Activated CD4-positive, alpha-beta T cell treated with anti-CD3 and anti-CD28 coated beads for 36 hours (primary cell): ENCODE measurements at regions of chr19 and their contacts with region 1.

Region 1: DNA sequence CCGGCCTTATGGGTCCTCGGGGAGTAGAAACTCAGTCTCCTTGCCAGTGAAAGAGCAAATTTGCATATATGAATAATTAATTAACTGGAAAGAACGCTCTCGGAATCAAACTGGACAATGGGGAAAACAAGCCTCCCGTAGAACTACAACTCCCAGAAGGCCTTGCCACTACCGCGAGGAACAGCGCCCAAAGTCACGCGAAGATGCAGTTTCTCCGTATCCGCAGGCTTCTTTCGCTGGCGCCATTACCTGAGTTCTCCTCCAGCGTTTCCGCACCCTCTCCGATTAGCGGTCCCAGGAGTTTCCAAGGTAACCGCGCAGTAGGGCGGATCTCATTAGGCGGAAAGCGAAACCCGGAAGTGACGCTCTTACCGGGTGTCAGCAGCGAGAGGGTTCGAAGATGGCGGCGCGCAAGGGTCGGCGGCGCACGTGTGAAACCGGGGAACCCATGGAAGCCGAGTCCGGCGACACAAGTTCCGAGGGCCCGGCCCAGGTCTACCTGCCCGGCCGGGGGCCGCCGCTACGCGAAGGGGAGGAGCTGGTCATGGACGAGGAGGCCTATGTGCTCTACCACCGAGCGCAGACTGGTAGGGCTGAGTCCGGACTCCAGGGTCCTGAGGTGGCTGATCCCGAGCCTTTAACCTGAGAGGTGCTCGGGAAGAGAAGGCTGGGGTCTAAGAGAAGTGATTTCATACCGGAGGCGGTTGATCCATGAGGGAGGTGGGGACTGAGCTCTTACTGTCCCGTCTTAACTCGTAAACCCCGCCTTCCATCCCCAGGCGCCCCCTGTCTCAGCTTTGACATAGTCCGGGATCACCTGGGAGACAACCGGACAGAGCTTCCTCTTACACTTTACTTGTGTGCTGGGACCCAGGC is at the start of gene GRWD1:
- DNase-seq: peak; percentile 97
- ATAC-seq: peak; percentile 98
- H3K4me3 Mint-ChIP-seq: peak within 1 kb of the TSS; percentile 86
- H3K27ac Mint-ChIP-seq: peak within 1 kb of the TSS; percentile 89
- H3K4me1 Mint-ChIP-seq: peaks cover 37% of the 10 kb centered on the region
- H3K27me3 Mint-ChIP-seq: peaks cover 20% of the 10 kb centered on the region
- total RNA-seq, gene GRWD1: 43.4 to 51.3 TPM

Region 2: DNA sequence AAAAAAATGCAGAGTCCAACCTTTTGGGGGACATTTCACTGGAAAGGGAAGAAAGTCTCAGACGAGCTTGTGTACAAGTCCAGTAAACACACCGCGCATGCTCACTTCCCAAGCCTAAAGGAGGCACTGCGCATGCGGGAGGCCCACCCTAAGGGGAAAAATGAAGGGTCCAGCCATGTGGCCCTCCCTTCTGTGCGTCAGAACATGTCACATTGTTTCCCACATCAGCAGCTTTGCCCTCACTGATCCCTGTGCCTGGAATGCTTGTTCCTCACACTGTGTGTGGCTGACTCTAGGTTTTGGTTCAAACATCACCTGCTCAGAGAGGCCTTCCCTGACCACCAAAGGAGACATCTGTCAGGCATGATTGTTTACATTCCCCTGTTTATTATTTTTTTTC is 447.0 kb before region 1 on chr19:
- CTCF ChIA-PET with region 1: no interaction called
- POLR2A ChIA-PET with region 1: no interaction called
- intact Hi-C with region 1: no loop called
- DNase-seq: no peak
- ATAC-seq: no peak
- H3K4me3 Mint-ChIP-seq: no peak overlapping the region
- H3K27ac Mint-ChIP-seq: no peak overlapping the region
- H3K4me1 Mint-ChIP-seq: no peaks in the 10 kb centered on the region
- H3K27me3 Mint-ChIP-seq: peaks cover 19% of the 10 kb centered on the region

Region 3: GRCh38 chr19:48170038-48170812 is 275.6 kb before region 1 on chr19 and contains the starts of genes LIG1 and ZSWIM9:
- CTCF ChIA-PET with region 1: no interaction called
- POLR2A ChIA-PET with region 1: no interaction called
- intact Hi-C with region 1: loop called in 1 of 2 experiments (anchors 1 kb)
- DNase-seq: peak; percentile 96
- ATAC-seq: peak; percentile 90
- H3K4me3 Mint-ChIP-seq: peak within 1 kb of the TSS; percentile 79
- H3K27ac Mint-ChIP-seq: peak within 1 kb of the TSS; percentile 95
- H3K4me1 Mint-ChIP-seq: peaks cover 30% of the 10 kb centered on the region
- H3K27me3 Mint-ChIP-seq: no peaks in the 10 kb centered on the region
- total RNA-seq, gene LIG1: 193 to 194 TPM
- total RNA-seq, gene ZSWIM9: 7.4 to 10.9 TPM

Region 4: DNA sequence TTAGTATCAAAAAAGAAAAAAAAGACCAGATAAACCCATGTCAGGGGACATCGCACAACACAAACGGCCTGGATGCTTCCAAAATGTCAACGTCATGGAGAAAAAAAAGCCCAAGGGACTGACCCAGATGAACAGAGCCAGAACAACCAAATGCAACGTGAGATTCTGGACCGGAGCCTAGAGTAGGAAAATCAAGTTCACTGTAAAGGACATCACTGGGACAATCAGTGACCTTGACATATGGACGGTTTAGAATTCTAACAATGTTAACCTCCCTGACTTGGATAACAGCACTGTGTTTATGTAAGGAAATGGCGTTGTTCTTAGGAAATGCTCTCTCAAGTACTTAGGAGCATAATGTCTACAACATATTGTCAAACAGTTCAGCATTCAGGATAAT is 135.6 kb before region 1 on chr19:
- CTCF ChIA-PET with region 1: no interaction called
- POLR2A ChIA-PET with region 1: no interaction called
- intact Hi-C with region 1: no loop called
- DNase-seq: no peak
- ATAC-seq: no peak
- H3K4me3 Mint-ChIP-seq: no peak overlapping the region
- H3K27ac Mint-ChIP-seq: no peak overlapping the region
- H3K4me1 Mint-ChIP-seq: no peaks in the 10 kb centered on the region
- H3K27me3 Mint-ChIP-seq: no peaks in the 10 kb centered on the region

Region 5: DNA sequence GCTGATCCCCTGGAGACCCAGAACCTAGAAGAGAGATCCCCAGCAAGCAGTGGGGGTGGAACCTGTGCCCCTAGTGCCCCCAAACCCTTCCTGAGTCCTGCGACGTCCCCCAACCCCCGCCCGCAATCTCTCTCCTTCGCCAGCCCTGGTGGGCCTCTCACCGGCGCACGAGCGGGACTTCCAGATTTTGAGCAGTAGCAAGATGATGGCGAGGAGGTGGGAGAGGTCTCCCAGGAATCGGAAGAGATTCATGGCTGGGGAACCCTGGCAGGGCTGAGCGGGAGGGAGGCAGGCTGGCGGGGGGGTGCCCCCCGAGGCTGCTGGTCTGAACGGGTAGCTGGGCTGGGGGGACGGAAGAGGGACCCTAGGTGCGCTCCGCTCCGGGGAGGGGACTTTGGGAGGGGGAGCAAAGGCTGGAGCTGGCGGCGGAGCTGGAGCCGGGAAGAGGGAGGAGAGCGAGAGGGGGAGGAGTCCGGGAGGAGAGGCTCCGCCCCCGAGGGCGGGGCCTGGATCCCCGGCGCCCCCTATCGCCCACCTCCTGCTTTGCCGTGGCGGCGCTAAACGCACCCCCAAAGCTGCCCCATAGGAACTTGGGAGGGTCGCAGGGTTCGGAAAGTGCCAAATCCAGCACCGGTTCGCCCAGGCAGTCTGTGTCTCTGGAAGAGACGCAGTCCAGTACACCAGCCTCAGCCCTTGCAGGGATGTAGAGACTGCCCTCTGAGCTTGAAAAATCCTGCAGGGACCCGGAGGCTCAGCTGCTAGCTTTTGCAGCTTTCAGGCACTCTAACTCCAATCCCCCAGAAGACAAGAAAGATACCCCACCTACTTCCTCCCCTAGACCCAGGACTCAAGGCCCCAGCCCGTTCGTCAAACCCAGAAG is 54.5 kb before region 1 on chr19 and contains the start of gene KDELR1:
- CTCF ChIA-PET with region 1: no interaction called
- POLR2A ChIA-PET with region 1: no interaction called
- intact Hi-C with region 1: loop called in 1 of 2 experiments (anchors 1 kb)
- DNase-seq: peak; percentile 85
- ATAC-seq: peak; percentile 82
- H3K4me3 Mint-ChIP-seq: peak within 1 kb of the TSS; percentile 92
- H3K27ac Mint-ChIP-seq: peak within 1 kb of the TSS; percentile 93
- H3K4me1 Mint-ChIP-seq: peaks cover 17% of the 10 kb centered on the region
- H3K27me3 Mint-ChIP-seq: peaks cover 19% of the 10 kb centered on the region
- total RNA-seq, gene KDELR1: 69.5 to 78.8 TPM

Region 6: GRCh38 chr19:48419158-48419920 is 26.5 kb before region 1 on chr19:
- CTCF ChIA-PET with region 1: no interaction called
- POLR2A ChIA-PET with region 1: interaction called, 4 read pairs
- intact Hi-C with region 1: loop called in 1 of 2 experiments (anchors 1 kb)
- DNase-seq: peak; percentile 87
- ATAC-seq: peak; percentile 81
- H3K4me3 Mint-ChIP-seq: peak overlapping the region; percentile 29
- H3K27ac Mint-ChIP-seq: peak overlapping the region; percentile 83
- H3K4me1 Mint-ChIP-seq: peaks cover 21% of the 10 kb centered on the region
- H3K27me3 Mint-ChIP-seq: peaks cover 15% of the 10 kb centered on the region

Region 7: GRCh38 chr19:48475369-48476068 is 29.7 kb after region 1 on chr19:
- CTCF ChIA-PET with region 1: no interaction called
- POLR2A ChIA-PET with region 1: no interaction called
- intact Hi-C with region 1: no loop called
- DNase-seq: no peak
- ATAC-seq: no peak
- H3K4me3 Mint-ChIP-seq: no peak overlapping the region
- H3K27ac Mint-ChIP-seq: peak overlapping the region; percentile 51
- H3K4me1 Mint-ChIP-seq: peaks cover 5% of the 10 kb centered on the region
- H3K27me3 Mint-ChIP-seq: no peaks in the 10 kb centered on the region

Region 8: GRCh38 chr19:48588670-48589399 is 143.0 kb after region 1 on chr19:
- CTCF ChIA-PET with region 1: interaction called, 4 read pairs
- POLR2A ChIA-PET with region 1: no interaction called
- intact Hi-C with region 1: loop called in 1 of 2 experiments (anchors 1 kb)
- DNase-seq: peak; percentile 94
- ATAC-seq: peak; percentile 89
- H3K4me3 Mint-ChIP-seq: peak overlapping the region; percentile 35
- H3K27ac Mint-ChIP-seq: peak overlapping the region; percentile 43
- H3K4me1 Mint-ChIP-seq: peaks cover 15% of the 10 kb centered on the region
- H3K27me3 Mint-ChIP-seq: no peaks in the 10 kb centered on the region

Region 9: DNA sequence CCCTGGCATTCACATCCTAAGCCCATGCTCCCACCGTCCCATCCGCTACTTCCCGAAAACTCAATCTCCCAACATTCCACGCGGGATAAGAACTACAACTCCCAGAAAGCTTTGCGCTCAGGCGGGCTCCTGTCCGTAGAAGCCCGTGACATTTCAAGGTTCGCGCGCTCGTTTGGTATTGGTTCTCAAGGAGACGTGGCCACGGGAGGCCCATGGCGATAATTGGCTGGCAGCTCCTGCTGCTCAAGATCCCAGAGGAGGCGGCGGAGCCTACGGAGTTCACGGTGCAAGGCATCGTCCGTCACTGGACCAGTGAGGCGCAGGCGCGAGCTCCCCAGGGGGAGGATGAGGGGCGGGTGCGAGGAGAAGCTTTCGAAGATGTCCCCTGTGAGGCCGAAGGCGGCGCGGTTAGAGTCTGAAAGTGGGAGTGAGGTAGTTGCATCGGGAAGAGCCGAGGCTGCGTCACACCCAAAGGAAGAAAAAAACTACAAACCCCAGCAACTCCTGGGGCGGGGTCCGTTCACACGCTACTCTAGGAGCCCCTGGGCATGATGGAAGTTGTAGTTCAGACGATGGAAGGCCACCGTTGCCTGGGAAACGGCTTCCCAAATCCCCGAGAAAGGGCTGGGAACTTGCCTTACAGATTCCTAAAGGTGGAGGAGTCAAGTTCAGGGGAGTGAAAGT is 274.9 kb after region 1 on chr19:
- CTCF ChIA-PET with region 1: no interaction called
- POLR2A ChIA-PET with region 1: no interaction called
- intact Hi-C with region 1: loop called in 1 of 2 experiments (anchors 2 kb)
- DNase-seq: peak; percentile 97
- ATAC-seq: peak; percentile 96
- H3K4me3 Mint-ChIP-seq: peak overlapping the region; percentile 80
- H3K27ac Mint-ChIP-seq: peak overlapping the region; percentile 97
- H3K4me1 Mint-ChIP-seq: peaks cover 14% of the 10 kb centered on the region
- H3K27me3 Mint-ChIP-seq: no peaks in the 10 kb centered on the region